CD4-positive, alpha-beta memory T cell (primary cell): ENCODE measurements at regions of chr2 and their contacts with region 1.

Region 1: DNA sequence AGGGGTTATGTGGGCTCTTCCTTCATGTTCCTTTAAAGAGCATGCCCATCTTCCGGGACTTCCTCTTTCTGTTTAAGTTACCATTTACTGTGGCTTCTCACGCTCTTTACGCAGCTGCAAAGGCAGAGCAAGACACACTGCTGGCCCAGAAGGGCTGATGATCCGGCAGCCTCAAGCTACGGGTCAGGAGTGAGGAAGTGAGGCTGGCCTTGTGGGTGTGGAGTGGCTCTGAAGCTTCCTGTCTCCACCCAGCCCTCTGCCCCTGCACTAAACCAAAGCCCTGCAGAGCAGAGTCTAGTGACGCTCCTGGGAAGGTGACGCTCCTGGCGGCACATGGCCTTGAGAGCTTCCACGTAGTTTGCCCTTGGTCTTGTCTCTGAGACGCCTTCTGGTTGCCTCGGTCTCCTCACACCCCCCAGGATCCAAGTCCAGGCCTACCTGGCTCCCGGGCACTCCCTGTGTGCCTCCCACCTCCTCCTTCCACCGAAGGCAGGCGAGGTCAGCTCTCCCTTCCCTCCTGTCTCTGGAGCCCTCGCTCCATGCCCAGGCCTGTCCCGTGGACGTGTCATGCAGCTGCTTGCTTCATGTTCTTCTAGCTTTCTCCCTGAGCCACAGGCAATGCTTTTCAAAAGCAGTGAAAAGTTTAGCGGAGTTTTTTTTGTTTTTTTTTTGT is 50.3 kb downstream of the ARL4C start:
- DNase-seq: peak; percentile 87 to 92 (median 90)
- H3K4me3 ChIP-seq: no peak overlapping the region
- H3K4me3 Mint-ChIP-seq: peak overlapping the region; percentile 38 to 90 (median 80)
- H3K27ac ChIP-seq: peak overlapping the region; percentile 84
- H3K27ac Mint-ChIP-seq: peak overlapping the region; percentile 98 to 100 (median 100)
- H3K4me1 ChIP-seq: peaks cover 95% of the 10 kb centered on the region
- H3K4me1 Mint-ChIP-seq: peaks cover 69 to 96% (median 77%) of the 10 kb centered on the region in 4 donors
- H3K27me3 ChIP-seq: no peaks in the 10 kb centered on the region
- H3K27me3 Mint-ChIP-seq: no peaks in the 10 kb centered on the region

Region 2: GRCh38 chr2:234300932-234301823 is 145.4 kb before region 1 on chr2:
- CTCF ChIA-PET with region 1: no interaction called
- POLR2A ChIA-PET with region 1: interaction called, 14 read pairs
- intact Hi-C with region 1: no loop called
- DNase-seq: no peak
- H3K4me3 ChIP-seq: no peak overlapping the region
- H3K4me3 Mint-ChIP-seq: peak overlapping the region; percentile 25 to 76 (median 63)
- H3K27ac ChIP-seq: peak overlapping the region; percentile 7
- H3K27ac Mint-ChIP-seq: peak overlapping the region; percentile 48 to 94 (median 75)
- H3K4me1 ChIP-seq: peaks cover 49% of the 10 kb centered on the region
- H3K4me1 Mint-ChIP-seq: peaks cover 42 to 67% (median 60%) of the 10 kb centered on the region in 4 donors
- H3K27me3 ChIP-seq: no peaks in the 10 kb centered on the region
- H3K27me3 Mint-ChIP-seq: no peaks in the 10 kb centered on the region

Region 3: GRCh38 chr2:234368861-234369261 is 77.7 kb before region 1 on chr2:
- CTCF ChIA-PET with region 1: interaction called, 6 read pairs
- POLR2A ChIA-PET with region 1: interaction called, 14 read pairs
- intact Hi-C with region 1: no loop called
- DNase-seq: peak; percentile 31 to 70 (median 37)
- H3K4me3 ChIP-seq: no peak overlapping the region
- H3K4me3 Mint-ChIP-seq: peak overlapping the region in 4 of 8 donors; percentile 60 to 77 (median 61)
- H3K27ac ChIP-seq: peak overlapping the region; percentile 33
- H3K27ac Mint-ChIP-seq: peak overlapping the region; percentile 82 to 96 (median 93)
- H3K4me1 ChIP-seq: peaks cover 78% of the 10 kb centered on the region
- H3K4me1 Mint-ChIP-seq: peaks cover 50 to 79% (median 64%) of the 10 kb centered on the region in 4 donors
- H3K27me3 ChIP-seq: no peaks in the 10 kb centered on the region
- H3K27me3 Mint-ChIP-seq: no peaks in the 10 kb centered on the region

Region 4: GRCh38 chr2:234382131-234382530 is 64.4 kb before region 1 on chr2:
- CTCF ChIA-PET with region 1: no interaction called
- POLR2A ChIA-PET with region 1: no interaction called
- intact Hi-C with region 1: no loop called
- DNase-seq: no peak
- H3K4me3 ChIP-seq: no peak overlapping the region
- H3K4me3 Mint-ChIP-seq: no peak overlapping the region
- H3K27ac ChIP-seq: no peak overlapping the region
- H3K27ac Mint-ChIP-seq: no peak overlapping the region
- H3K4me1 ChIP-seq: no peaks in the 10 kb centered on the region
- H3K4me1 Mint-ChIP-seq: peaks cover 2 to 11% (median 8%) of the 10 kb centered on the region in 4 donors
- H3K27me3 ChIP-seq: no peaks in the 10 kb centered on the region
- H3K27me3 Mint-ChIP-seq: no peaks in the 10 kb centered on the region

Region 5: DNA sequence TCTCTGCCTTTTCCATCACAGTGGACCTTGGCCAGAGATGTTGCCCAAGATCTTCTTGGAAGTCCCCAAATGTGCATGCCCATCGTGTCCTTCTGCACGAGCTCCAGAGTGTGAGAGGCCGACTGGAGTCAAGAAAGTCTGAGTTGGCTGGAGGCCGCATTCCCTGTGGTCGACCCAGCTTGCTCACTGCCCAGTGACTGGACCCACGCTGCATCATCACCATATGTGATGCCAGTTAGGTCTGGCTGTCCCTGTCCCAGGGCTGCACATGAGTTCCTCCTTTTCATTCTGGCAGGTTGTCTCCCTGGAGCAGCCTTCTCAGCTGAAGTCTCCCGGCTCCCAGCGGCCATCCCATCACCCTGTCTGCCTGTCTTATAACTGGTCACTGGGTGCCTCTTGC is 43.4 kb before region 1 on chr2:
- CTCF ChIA-PET with region 1: no interaction called
- POLR2A ChIA-PET with region 1: no interaction called
- intact Hi-C with region 1: no loop called
- DNase-seq: no peak
- H3K4me3 ChIP-seq: no peak overlapping the region
- H3K4me3 Mint-ChIP-seq: no peak overlapping the region
- H3K27ac ChIP-seq: no peak overlapping the region
- H3K27ac Mint-ChIP-seq: peak overlapping the region in 3 of 7 donors; percentile 48 to 68 (median 62)
- H3K4me1 ChIP-seq: peaks cover 8% of the 10 kb centered on the region
- H3K4me1 Mint-ChIP-seq: peaks cover 12 to 32% (median 17%) of the 10 kb centered on the region in 4 donors
- H3K27me3 ChIP-seq: no peaks in the 10 kb centered on the region
- H3K27me3 Mint-ChIP-seq: no peaks in the 10 kb centered on the region

Region 6: DNA sequence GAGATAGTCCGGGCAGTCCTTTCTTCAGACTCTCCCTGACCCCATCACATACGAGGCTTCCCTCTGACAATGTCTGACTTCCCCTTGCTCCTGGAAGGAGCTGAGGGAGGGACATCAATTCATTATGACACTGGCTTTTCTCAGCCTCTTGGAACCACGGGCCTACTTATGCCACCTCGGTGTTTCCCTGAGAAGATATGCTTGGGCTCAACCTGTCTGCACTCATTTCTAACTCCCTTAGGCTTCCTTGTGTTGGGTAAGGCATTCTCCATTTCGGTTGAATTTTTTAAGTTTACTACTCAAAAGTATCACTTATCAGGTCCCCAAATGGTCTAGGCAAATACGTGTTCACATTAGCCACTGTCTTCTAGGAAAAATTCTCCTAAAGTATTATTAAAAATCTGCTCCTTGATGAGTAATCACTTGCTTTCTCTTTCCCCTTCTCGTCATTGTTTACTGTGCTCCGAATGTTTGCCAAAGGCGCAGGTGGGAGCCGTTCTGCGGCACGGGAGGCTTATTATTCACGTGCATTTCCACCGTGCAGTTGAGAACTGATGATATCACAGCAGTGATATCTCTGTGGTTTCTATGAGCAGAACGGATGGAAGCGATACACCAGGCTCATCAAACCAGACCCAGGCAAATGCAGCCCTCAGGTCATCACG is 17.2 kb after region 1 on chr2:
- CTCF ChIA-PET with region 1: interaction called, 11 read pairs
- POLR2A ChIA-PET with region 1: interaction called, 379 read pairs
- intact Hi-C with region 1: loop called (anchors 2 kb)
- DNase-seq: peak; percentile 83 to 90 (median 87)
- H3K4me3 ChIP-seq: peak overlapping the region; percentile 12 to 48
- H3K4me3 Mint-ChIP-seq: peak overlapping the region; percentile 69 to 86 (median 81)
- H3K27ac ChIP-seq: peak overlapping the region; percentile 86
- H3K27ac Mint-ChIP-seq: peak overlapping the region; percentile 88 to 99 (median 97)
- H3K4me1 ChIP-seq: peaks cover 81% of the 10 kb centered on the region
- H3K4me1 Mint-ChIP-seq: peaks cover 49 to 94% (median 73%) of the 10 kb centered on the region in 4 donors
- H3K27me3 ChIP-seq: no peaks in the 10 kb centered on the region
- H3K27me3 Mint-ChIP-seq: no peaks in the 10 kb centered on the region